ENCODE measurements at regions of chr11 and their contacts with region 1.

Region 1: DNA sequence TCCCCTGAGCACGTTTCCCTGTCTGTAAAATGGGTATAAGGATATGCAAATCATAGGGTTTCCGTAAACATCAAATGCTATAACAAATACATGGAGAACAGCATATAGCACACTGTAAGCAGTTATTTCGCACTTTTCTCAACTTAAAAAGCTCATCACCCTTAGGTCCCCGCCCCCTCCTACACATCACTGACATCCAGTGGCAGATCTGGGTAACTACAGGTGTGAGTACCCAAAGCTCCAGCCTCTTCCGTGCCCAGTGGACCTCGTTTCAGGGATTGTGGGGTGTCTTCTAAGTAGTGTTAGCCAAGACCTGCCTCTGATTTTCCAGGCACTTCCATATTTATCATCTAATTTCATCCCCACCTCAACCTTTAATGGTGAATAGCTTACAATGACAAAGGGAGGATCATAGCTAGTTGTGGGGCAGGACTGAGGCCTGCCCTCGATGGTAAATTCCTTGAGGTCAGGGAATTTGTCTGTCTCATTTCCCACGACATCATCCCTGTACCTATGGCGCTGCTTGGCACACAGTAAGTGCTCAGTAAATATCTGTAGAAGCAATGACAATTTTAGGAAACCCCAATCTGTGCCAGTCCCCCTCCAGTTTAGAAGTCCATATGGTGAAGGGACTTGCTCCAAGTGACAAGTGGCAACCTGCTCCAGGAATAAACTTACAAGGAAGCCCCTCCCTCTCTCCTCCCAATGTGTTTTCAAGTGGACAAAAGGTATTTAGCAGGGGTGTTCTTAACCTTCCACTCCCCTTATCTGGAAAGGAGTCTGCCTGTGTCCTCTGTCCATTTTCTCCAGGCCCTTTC is 340.5 kb downstream of the TENM4 start:
- DNase-seq: no peak
- ATAC-seq: peak in 2 of 8 donors; percentile 40 to 69
- H3K4me3 ChIP-seq: no peak overlapping the region
- H3K27ac ChIP-seq: no peak overlapping the region
- H3K4me1 ChIP-seq: peaks cover 0 to 11% (median 0%) of the 10 kb centered on the region in 9 donors
- H3K27me3 ChIP-seq: peaks cover 0 to 7% (median 0%) of the 10 kb centered on the region in 7 donors
- CTCF ChIP-seq: peak; percentile 27 to 71 (median 66)

Region 2: DNA sequence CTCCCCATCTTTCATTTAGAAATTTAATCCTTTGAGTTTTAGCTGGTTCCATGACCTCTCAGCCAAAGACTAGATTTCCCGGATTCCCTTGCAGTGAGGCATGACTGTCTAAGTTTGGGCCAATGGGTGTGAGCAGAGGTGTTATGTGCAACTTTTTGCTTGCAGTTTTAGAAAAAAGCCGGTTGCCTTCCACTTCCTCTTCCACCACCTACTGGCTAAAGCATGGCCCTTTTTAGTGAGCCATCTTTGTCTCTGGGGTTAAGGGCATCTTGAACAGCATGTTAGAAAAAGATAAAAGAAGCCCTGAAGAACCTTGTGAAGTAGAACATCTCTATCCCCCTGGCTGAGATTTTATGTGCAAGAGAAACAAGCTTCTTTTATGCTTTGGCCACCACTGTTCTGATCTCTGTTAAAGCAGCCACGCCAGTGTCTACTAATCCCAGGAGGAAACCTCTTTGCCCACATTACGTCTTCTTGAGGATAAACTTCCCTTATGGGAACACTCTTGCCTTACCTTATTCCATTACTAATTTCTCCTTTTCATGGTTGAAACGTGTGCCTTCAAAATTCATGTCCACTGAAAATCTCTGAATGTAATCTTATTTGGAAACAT is 60.6 kb after region 1 on chr11:
- intact Hi-C with region 1: no loop called
- DNase-seq: no peak
- ATAC-seq: no peak
- H3K4me3 ChIP-seq: no peak overlapping the region
- H3K27ac ChIP-seq: no peak overlapping the region
- H3K4me1 ChIP-seq: no peaks in the 10 kb centered on the region
- H3K27me3 ChIP-seq: no peaks in the 10 kb centered on the region
- CTCF ChIP-seq: peak in 4 of 9 donors; percentile 25 to 34 (median 26)

Region 3: DNA sequence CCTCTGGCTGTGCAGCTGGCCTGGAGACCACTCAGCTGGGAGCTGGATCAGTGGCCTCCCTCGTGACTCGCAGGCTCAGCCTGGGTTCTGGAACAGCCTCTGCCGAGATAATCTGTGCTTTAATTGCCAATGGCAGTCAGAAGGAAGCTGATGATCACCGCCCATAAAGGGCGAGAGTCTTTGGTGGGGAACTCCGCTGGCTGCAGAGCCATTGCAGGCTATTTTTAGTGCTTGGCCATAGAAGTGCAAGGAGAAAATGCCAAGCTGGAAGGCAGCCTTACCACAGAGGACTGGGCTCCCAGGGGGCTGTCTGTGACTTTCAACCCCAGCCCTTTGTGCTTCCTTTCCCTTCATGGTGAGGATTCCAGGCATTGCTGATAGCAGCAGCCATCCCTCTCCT is 402.7 kb after region 1 on chr11:
- intact Hi-C with region 1: loop called in 1 of 10 experiments (anchors 10 kb)
- DNase-seq: peak; percentile 23 to 54
- ATAC-seq: peak; percentile 82 to 93 (median 88)
- H3K4me3 ChIP-seq: no peak overlapping the region
- H3K27ac ChIP-seq: peak overlapping the region in 7 of 10 donors; percentile 58 to 79 (median 71)
- H3K4me1 ChIP-seq: peaks cover 0 to 17% (median 11%) of the 10 kb centered on the region in 9 donors
- H3K27me3 ChIP-seq: peaks cover 0 to 3% (median 0%) of the 10 kb centered on the region in 7 donors
- CTCF ChIP-seq: no peak